Mammary epithelial cell (primary cell): ENCODE measurements at regions of chr5 and their contacts with region 1.

Region 1: DNA sequence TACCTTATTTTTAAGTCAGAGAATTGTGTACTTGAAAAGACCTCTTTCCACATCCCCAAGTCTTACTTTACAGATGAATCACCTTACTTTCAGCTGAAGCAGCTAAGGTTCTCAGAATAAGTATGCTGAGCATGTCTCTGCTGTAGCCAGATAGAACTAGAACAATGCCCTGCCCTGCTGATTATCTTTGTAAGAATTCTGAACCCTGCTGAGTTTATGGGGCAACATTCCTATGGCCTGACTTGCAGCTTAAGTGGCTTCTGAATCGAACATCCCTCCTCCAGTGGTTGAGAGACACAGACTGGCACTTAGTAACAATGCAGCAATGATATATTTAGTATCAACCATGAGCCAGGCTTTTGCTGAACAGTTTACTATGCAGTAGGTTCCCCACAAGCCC is 592.0 kb upstream of the WWC1 start:
- DNase-seq: peak; percentile 99
- H3K4me3 ChIP-seq: no peak overlapping the region
- H3K27ac ChIP-seq: peak overlapping the region; percentile 100
- H3K4me1 ChIP-seq: peaks cover 34% of the 10 kb centered on the region
- H3K27me3 ChIP-seq: no peaks in the 10 kb centered on the region
- CTCF ChIP-seq: no peak

Region 2: DNA sequence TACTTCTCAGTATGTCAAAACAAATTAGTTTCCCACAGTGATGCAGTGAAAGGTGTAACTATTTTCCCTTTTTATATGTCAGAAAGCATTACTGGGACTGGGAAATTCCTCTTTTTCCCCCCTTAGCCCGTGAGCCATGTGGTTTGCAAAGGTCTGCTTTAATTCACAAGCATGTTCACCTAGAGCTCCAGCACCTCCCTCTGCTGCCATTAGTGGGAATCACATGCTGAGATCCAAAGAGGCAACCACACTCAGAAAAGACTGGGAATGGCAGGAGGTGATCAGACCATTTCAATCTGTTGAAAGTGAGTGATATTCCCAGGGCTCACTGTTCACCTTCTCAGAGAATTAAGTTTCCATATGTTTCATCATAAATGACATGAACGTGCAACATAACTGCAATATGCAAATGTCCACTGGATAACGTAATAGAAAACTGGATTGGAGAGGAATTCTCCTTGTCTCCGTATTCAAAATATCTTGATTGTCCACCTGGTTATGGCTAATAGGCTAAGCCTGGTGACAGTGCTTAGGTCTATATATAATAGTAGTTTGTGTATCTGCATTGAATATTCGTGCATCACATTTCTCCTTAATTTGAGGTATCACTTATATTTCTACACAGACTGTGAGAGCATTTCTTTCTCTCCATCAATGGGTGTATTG is 111.5 kb before region 1 on chr5:
- CTCF ChIA-PET with region 1: no interaction called
- dilution Hi-C with region 1: no loop called
- in situ Hi-C with region 1: loop called in 1 of 2 experiments (anchors 25 kb)
- intact Hi-C with region 1: loop called (anchors 5 kb)
- DNase-seq: peak; percentile 30
- H3K4me3 ChIP-seq: no peak overlapping the region
- H3K27ac ChIP-seq: no peak overlapping the region
- H3K4me1 ChIP-seq: no peaks in the 10 kb centered on the region
- H3K27me3 ChIP-seq: no peaks in the 10 kb centered on the region
- CTCF ChIP-seq: peak; percentile 48 to 67

Region 3: GRCh38 chr5:167642779-167643517 is 56.5 kb before region 1 on chr5:
- CTCF ChIA-PET with region 1: no interaction called
- dilution Hi-C with region 1: no loop called
- in situ Hi-C with region 1: no loop called
- intact Hi-C with region 1: loop called (anchors 1 kb)
- DNase-seq: peak; percentile 83
- H3K4me3 ChIP-seq: peak overlapping the region in 1 of 3 experiments; percentile 9
- H3K27ac ChIP-seq: peak overlapping the region; percentile 91
- H3K4me1 ChIP-seq: peaks cover 43% of the 10 kb centered on the region
- H3K27me3 ChIP-seq: no peaks in the 10 kb centered on the region
- CTCF ChIP-seq: no peak

Region 4: DNA sequence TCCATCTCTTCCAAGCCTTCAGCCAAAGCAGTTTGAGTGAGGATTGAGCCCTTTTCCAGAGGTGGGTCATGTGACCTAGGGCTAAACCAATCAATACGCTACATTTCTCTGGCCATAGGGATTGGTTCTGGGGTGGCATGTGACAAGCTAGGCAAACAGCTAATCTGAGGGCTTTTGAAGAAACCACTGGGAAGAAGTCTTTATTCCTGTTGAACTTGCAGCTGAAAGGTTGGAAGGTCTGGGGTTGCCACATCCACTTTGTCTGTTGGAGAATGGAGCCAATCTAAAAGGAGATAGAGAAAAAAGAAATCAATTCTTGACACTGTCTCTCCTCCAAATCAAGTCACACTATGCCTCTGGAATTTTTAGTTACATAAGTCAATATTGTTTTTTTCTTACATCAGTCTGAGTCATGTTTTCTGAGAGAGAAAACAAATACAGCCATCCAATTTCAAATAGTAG is 45.8 kb before region 1 on chr5:
- CTCF ChIA-PET with region 1: no interaction called
- dilution Hi-C with region 1: no loop called
- in situ Hi-C with region 1: no loop called
- intact Hi-C with region 1: loop called (anchors 2 kb)
- DNase-seq: peak; percentile 58
- H3K4me3 ChIP-seq: no peak overlapping the region
- H3K27ac ChIP-seq: no peak overlapping the region
- H3K4me1 ChIP-seq: peaks cover 12% of the 10 kb centered on the region
- H3K27me3 ChIP-seq: no peaks in the 10 kb centered on the region
- CTCF ChIP-seq: no peak

Region 5: DNA sequence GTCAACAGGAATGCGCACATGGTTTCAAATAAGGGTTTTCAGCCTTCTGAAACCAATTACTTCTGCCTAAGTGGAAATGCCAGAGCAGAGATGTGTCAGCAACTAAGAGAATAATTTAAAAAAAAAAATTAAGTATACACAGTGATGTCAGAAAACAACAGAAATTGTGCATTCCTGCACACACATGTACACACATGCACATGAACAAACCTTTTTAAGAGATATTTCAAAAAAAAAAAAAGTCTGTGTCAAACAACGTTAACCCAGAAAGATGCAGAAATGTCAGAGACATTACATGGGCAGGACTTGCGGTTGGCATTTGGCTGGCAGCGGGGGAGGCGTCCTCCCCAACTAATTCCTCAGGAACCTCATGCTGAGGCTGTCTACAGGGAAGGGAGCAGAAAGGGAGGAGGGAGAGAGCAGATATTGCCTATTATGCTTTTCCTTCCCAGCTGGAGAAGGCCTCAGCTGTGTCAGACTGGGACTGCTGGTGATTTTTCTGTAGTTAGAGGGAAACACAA is 55.1 kb after region 1 on chr5:
- CTCF ChIA-PET with region 1: no interaction called
- dilution Hi-C with region 1: no loop called
- in situ Hi-C with region 1: no loop called
- intact Hi-C with region 1: loop called (anchors 1 kb)
- DNase-seq: no peak
- H3K4me3 ChIP-seq: no peak overlapping the region
- H3K27ac ChIP-seq: no peak overlapping the region
- H3K4me1 ChIP-seq: peaks cover 15% of the 10 kb centered on the region
- H3K27me3 ChIP-seq: no peaks in the 10 kb centered on the region
- CTCF ChIP-seq: no peak

Region 6: GRCh38 chr5:168047043-168047668 is 347.7 kb after region 1 on chr5:
- CTCF ChIA-PET with region 1: no interaction called
- dilution Hi-C with region 1: no loop called
- in situ Hi-C with region 1: no loop called
- intact Hi-C with region 1: loop called (anchors 5 kb)
- DNase-seq: peak; percentile 50
- H3K4me3 ChIP-seq: no peak overlapping the region
- H3K27ac ChIP-seq: no peak overlapping the region
- H3K4me1 ChIP-seq: no peaks in the 10 kb centered on the region
- H3K27me3 ChIP-seq: no peaks in the 10 kb centered on the region
- CTCF ChIP-seq: peak; percentile 59 to 66